Left ventricle myocardium superior (tissue), 1 donor: ENCODE measurements at regions of chr19 and their contacts with region 1.

Region 1: DNA sequence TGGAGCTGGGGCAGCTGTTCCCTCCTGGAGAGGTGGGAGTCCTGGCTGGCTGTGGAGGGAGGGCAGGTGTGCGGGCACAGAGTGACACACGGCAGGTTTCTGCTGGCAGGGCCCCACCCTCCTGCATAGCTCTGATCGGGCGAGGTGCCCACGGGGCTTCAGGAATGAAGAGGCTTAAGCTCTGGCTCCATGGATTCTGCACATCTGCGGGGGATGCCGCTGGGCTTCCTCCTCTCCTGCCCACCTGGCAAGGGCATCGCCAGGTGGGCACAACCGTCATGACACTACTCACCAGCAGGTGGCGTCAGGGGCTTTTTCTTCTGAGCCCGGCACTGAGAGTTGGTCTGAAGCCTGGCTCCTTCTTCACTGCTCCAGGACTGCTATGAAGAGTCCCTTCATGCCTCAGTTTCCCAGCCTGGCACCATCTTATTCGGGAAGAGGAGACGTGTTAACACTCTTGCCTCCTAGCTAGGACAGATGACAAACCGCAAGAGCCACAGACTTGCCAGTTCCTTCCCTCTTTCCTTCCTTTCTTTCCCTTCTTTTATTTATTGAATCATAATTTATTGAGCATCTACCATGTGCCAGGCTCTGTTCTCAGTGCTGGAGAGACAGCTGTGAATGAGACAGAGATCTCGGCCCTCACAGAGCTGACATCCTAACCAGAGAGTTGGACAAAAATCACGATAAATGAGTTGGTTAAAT is 15.2 kb upstream of the PAK4 start:
- DNase-seq: peak; percentile 71
- ATAC-seq: peak; percentile 72

Region 2: GRCh38 chr19:39187559-39187957 is 77.1 kb after region 1 on chr19:
- intact Hi-C with region 1: loop called (anchors 10 kb)
- DNase-seq: no peak
- ATAC-seq: peak; percentile 34

Region 3: GRCh38 chr19:39328046-39328705 is 217.8 kb after region 1 on chr19:
- intact Hi-C with region 1: loop called (anchors 10 kb)
- DNase-seq: peak; percentile 90
- ATAC-seq: peak; percentile 84